Dorsolateral prefrontal cortex (tissue), 120 donors: ENCODE measurements at regions of chrX and their contacts with region 1.

Region 1: GRCh38 chrX:16670998-16671397 is 21.0 kb downstream of the S100G start:
- DNase-seq: peak in 2 of 10 donors; percentile 4 to 12
- H3K4me3 ChIP-seq: no peak overlapping the region
- H3K27ac ChIP-seq: no peak overlapping the region
- H3K27me3 ChIP-seq: peaks cover 0 to 46% (median 9%) of the 10 kb centered on the region in 45 donors
- CTCF ChIP-seq: peak in 54 of 56 donors; percentile 25 to 75 (median 54)

Region 2: GRCh38 chrX:15686818-15687685 is 983.9 kb before region 1 on chrX:
- intact Hi-C with region 1: loop called in 1 of 2 experiments (anchors 10 kb)
- DNase-seq: peak in 4 of 10 donors; percentile 29 to 69 (median 51)
- H3K4me3 ChIP-seq: no peak overlapping the region
- H3K27ac ChIP-seq: no peak overlapping the region
- H3K27me3 ChIP-seq: peaks cover 0 to 12% (median 0%) of the 10 kb centered on the region in 45 donors
- CTCF ChIP-seq: peak; percentile 23 to 86 (median 75)

Region 3: GRCh38 chrX:16123222-16123786 is 547.7 kb before region 1 on chrX and contains the start of gene GRPR:
- intact Hi-C with region 1: loop called in 1 of 2 experiments (anchors 10 kb)
- DNase-seq: peak; percentile 31 to 88 (median 76)
- H3K4me3 ChIP-seq: peak within 1 kb of the TSS in 1 of 59 donors; percentile 2
- H3K27ac ChIP-seq: no peak within 1 kb of the TSS
- H3K27me3 ChIP-seq: peaks cover 0 to 87% (median 22%) of the 10 kb centered on the region in 45 donors
- CTCF ChIP-seq: peak; percentile 38 to 84 (median 70)
- total RNA-seq, gene GRPR: 0.53 to 5.9 (median 1.7) TPM

Region 4: GRCh38 chrX:16436348-16437188 is 234.4 kb before region 1 on chrX:
- intact Hi-C with region 1: loop called (anchors 5 to 10 kb)
- DNase-seq: peak in 9 of 10 donors; percentile 24 to 80 (median 62)
- H3K4me3 ChIP-seq: no peak overlapping the region
- H3K27ac ChIP-seq: no peak overlapping the region
- H3K27me3 ChIP-seq: peaks cover 0 to 75% (median 26%) of the 10 kb centered on the region in 45 donors
- CTCF ChIP-seq: peak in 55 of 56 donors; percentile 34 to 77 (median 60)